Ascending aorta (tissue), 2 donors: ENCODE measurements at regions of chr1 and their contacts with region 1.

Region 1: DNA sequence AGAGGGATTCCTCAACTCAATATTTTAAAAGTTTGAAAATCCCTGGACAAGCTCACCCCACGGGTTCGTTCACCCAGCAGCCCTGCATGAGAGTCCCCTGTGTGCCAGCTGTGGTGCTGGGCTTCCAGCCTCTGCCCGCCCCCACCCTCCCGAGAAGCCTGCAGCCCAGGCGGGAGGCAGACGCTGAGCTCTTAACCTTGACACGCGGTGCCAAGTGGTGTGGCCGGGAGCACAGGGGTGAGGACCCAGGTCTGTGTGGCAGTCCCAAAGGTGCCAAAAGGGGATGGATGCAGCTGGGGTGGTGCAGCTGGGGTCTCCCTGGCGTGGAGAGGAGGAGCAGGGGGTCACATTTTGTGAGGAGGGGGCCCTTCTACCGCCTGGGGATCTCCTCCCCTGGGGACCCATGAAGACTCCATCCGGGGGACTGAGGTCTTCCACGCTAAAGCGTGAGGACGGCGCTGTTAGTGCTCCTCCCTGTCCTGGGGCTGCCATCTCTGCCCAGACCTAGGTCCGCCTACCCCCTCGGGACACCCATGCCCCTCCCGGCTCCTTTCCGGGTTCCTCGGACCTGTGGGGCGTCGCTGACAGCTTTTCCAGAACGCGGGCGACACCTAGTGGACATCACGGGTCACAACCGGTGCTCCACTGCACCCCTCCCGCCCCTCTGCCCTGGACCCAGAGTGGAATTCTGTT is 12.9 kb downstream of the PLA2G2F start:
- DNase-seq: peak in 1 of 2 donors; percentile 87
- H3K4me3 ChIP-seq: peak overlapping the region; percentile 44 to 49
- H3K27ac ChIP-seq: no peak overlapping the region
- H3K4me1 ChIP-seq: peaks cover 0 to 4% of the 10 kb centered on the region in 2 donors
- H3K27me3 ChIP-seq: no peaks in the 10 kb centered on the region
- CTCF ChIP-seq: peak; percentile 88 to 96 (median 93)

Region 2: DNA sequence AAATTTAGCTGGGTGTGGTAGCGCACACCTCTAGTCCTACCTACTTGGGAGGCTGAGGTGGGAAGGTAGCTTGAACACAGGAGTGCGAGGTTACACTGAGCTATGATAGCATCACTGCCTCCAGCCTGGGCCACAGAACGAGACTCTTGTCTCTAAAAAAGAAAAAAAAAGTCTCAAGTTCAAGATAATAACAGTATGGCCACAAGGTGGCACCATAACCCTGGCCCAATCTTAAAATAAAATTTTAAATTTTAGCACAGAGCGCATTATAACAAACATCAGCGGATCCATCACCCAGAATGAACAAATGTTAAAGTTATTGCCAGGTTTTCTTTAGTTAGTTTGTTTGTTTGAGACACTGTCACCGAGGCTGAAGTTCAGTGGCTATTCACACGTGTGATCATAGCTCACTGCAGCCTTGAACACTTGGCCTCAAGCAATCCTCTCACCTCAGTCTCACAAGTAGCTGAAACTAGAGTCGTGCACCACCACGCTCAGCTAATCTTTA is 490.3 kb before region 1 on chr1:
- intact Hi-C with region 1: loop called (anchors 5 kb)
- DNase-seq: no peak
- H3K4me3 ChIP-seq: no peak overlapping the region
- H3K27ac ChIP-seq: no peak overlapping the region
- H3K4me1 ChIP-seq: peaks cover 5 to 7% of the 10 kb centered on the region in 2 donors
- H3K27me3 ChIP-seq: peaks cover 10% of the 10 kb centered on the region
- CTCF ChIP-seq: peak; percentile 54 to 78 (median 56)

Region 3: DNA sequence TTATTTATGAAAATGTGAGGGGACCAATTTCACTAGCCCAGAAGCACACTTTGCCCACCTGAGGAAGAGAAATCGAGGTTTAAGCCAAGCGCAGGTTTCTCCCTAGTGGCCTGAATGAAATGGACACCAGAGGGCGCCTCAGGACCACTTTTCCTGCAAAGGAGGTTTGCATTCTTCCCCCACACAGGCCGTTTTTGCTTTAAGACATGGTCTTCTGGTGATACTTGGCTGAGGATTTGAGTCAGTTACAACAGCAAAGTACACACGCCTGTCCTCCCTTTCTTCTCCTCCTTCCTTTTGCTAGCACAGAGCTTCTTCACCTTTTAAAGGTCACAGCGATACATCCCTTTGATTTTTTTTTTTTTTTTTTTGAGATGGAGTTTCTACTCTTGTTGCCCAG is 234.0 kb before region 1 on chr1:
- intact Hi-C with region 1: loop called (anchors 1 kb)
- DNase-seq: peak in 1 of 2 donors; percentile 84
- H3K4me3 ChIP-seq: no peak overlapping the region
- H3K27ac ChIP-seq: no peak overlapping the region
- H3K4me1 ChIP-seq: no peaks in the 10 kb centered on the region
- H3K27me3 ChIP-seq: no peaks in the 10 kb centered on the region
- CTCF ChIP-seq: peak; percentile 67 to 91 (median 77)

Region 4: GRCh38 chr1:19974822-19975416 is 177.1 kb before region 1 on chr1:
- intact Hi-C with region 1: loop called (anchors 1 kb)
- DNase-seq: no peak
- H3K4me3 ChIP-seq: no peak overlapping the region
- H3K27ac ChIP-seq: no peak overlapping the region
- H3K4me1 ChIP-seq: no peaks in the 10 kb centered on the region
- H3K27me3 ChIP-seq: no peaks in the 10 kb centered on the region
- CTCF ChIP-seq: peak; percentile 33 to 50 (median 45)

Region 5: DNA sequence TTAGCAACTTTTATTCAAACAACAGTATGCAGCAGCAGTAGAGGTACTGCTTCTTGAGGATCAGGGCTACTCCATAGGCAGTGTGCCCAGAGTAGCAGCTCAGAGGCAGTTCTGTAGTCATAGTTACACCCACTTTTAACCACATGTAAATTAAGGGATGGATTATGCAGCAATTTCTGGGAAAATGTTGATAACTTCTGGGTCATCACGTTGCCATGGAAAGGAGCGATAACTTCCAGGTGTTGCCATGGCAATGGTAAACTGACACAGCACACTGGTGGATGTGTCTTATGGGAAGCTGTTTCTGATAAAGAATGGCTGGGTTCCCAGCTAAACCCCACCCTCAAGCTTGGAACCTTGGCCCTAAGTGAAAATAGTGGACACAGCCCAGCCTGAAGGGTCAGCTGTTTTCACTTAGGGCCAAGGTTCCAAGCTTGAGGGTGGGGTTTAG is 143.6 kb before region 1 on chr1:
- intact Hi-C with region 1: no loop called
- DNase-seq: no peak
- H3K4me3 ChIP-seq: no peak overlapping the region
- H3K27ac ChIP-seq: no peak overlapping the region
- H3K4me1 ChIP-seq: no peaks in the 10 kb centered on the region
- H3K27me3 ChIP-seq: no peaks in the 10 kb centered on the region
- CTCF ChIP-seq: no peak

Region 6: DNA sequence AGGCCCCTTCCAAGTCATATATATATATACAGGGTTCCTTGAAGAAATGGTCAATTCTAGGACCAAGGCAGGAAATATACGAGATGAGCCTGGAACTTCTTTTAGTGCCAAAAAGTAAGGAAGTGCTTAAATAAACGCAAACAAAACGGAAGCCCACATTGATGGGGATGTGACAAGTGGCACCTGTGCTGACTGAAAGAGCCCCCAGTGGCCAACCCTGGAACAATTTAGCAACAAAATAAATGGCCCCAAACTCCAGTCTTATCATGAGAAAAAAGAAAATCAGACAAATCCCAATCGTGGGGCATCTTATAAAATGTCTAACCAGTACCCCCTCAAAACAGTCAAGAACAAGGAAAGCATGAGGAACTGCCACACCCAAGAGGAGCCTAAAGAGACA is 64.4 kb before region 1 on chr1:
- intact Hi-C with region 1: no loop called
- DNase-seq: no peak
- H3K4me3 ChIP-seq: no peak overlapping the region
- H3K27ac ChIP-seq: no peak overlapping the region
- H3K4me1 ChIP-seq: no peaks in the 10 kb centered on the region
- H3K27me3 ChIP-seq: no peaks in the 10 kb centered on the region
- CTCF ChIP-seq: no peak